ENCODE measurements at regions of chr12 and their contacts with region 1.

Region 1: DNA sequence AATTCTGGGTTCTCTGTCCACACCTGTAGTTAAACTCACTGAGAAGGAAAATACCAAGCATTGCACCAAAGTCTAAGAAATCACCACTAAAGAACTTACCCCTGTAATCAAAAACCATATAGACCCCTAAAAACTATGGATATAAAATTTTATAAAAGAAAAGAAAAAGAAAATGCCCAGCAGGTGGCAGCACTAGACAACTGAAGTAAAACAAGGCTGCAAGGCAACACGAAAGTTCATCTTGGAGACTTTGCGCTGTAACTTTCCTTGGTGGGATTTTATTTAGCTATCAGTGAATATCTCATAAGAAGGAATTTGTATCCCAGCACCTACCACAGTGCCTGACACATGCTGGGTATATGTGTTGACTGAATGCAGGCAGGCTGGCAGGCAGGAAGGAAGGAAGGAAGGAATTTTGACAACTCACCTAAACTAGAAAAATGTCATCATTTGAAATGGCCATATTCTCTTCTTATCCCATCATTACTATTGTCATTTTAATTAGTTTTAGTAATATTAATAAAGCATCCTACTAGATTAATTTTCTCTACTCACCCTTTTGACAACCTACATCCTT is 68.2 kb upstream of the ETV6 start:
- DNase-seq: peak; percentile 62 to 71 (median 67)
- H3K4me3 ChIP-seq: no peak overlapping the region
- H3K4me3 Mint-ChIP-seq: peak overlapping the region in 1 of 8 donors; percentile 59
- H3K27ac ChIP-seq: no peak overlapping the region
- H3K27ac Mint-ChIP-seq: peak overlapping the region in 1 of 7 donors; percentile 79
- H3K4me1 ChIP-seq: peaks cover 3% of the 10 kb centered on the region
- H3K4me1 Mint-ChIP-seq: peaks cover 0 to 4% (median 3%) of the 10 kb centered on the region in 4 donors
- H3K27me3 ChIP-seq: no peaks in the 10 kb centered on the region
- H3K27me3 Mint-ChIP-seq: peaks cover 2 to 3% of the 10 kb centered on the region in 2 donors

Region 2: DNA sequence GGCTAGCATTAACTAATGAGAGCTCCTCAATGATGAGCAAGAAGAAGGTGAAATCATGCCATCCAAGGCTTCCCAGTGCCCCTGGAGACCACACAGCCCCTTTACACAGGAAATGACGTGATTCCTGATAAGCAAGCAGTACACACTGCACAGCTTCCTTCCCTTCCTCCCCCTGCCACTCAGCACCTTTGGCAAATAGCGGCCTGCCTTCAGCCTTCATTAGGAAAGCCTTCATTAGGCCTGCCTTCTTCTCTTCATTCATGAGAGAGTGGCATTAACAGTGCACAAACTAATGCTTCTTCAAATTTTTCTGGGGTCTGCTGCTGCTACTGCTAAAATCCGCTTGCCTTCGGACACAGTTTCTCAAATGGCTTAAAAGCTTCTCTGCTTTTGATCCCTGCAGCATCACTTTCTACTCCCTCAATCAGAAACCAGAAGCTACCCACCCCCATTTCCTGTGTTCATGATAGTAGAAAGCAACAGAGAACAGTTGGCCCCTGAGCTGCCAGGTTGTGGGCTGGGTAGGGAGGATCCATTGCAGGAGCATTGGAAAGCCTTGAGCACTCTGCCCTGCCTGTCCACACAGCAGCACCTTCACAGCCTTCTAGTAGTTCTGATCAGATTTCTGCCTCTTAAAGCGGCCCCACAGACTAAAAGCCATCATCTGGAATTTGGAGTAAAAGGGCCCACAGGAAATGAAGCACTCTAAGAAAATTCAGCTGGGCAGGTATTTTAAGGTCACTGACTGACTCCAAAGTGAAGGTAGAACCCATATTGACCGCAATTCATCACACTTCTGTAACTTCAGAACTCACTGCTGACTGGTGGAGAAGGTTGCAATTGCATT is 35.6 kb before region 1 on chr12:
- CTCF ChIA-PET with region 1: interaction called, 14 read pairs
- POLR2A ChIA-PET with region 1: no interaction called
- intact Hi-C with region 1: no loop called
- DNase-seq: peak; percentile 78 to 82 (median 80)
- H3K4me3 ChIP-seq: peak overlapping the region in 1 of 2 donors; percentile 14
- H3K4me3 Mint-ChIP-seq: peak overlapping the region; percentile 71 to 88 (median 78)
- H3K27ac ChIP-seq: peak overlapping the region; percentile 57
- H3K27ac Mint-ChIP-seq: peak overlapping the region; percentile 94 to 99 (median 96)
- H3K4me1 ChIP-seq: peaks cover 55% of the 10 kb centered on the region
- H3K4me1 Mint-ChIP-seq: peaks cover 32 to 68% (median 51%) of the 10 kb centered on the region in 4 donors
- H3K27me3 ChIP-seq: no peaks in the 10 kb centered on the region
- H3K27me3 Mint-ChIP-seq: no peaks in the 10 kb centered on the region

Region 3: DNA sequence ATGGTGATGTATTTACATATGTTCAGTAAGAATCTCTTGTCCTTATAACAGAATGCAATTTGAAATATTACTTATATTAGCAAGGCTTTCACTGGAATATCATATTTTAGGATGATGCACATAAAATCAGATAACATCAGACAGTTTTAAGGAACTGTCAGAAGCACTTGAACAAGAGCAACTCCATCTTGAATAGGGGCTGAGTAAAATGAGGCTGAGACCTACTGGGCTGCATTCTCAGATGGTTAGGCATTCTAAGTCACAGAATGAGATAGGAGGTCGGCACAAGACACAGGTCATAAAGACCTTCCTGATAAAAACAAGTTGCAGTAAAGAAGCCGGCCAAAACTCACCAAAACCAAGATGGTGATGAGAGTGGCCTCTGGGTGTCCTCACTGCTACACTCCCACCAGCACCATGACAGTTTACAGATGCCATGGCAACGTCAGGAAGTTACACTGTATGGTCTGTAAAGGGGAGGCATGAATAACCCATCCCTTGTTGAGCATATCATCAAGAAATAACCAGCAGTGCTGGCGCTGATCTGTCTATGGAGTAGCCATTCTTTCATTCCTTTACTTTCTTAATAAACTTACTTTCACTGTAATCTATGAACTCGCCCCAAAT is 40.6 kb after region 1 on chr12:
- CTCF ChIA-PET with region 1: interaction called, 3 read pairs
- POLR2A ChIA-PET with region 1: no interaction called
- intact Hi-C with region 1: loop called (anchors 5 kb)
- DNase-seq: peak; percentile 21 to 43 (median 34)
- H3K4me3 ChIP-seq: no peak overlapping the region
- H3K4me3 Mint-ChIP-seq: no peak overlapping the region
- H3K27ac ChIP-seq: no peak overlapping the region
- H3K27ac Mint-ChIP-seq: peak overlapping the region in 2 of 7 donors; percentile 39 to 91
- H3K4me1 ChIP-seq: no peaks in the 10 kb centered on the region
- H3K4me1 Mint-ChIP-seq: peaks cover 0 to 6% (median 3%) of the 10 kb centered on the region in 4 donors
- H3K27me3 ChIP-seq: no peaks in the 10 kb centered on the region
- H3K27me3 Mint-ChIP-seq: no peaks in the 10 kb centered on the region

Region 4: GRCh38 chr12:12070674-12071656 is 489.7 kb after region 1 on chr12 and contains the start of gene BCL2L14:
- CTCF ChIA-PET with region 1: interaction called, 4 read pairs
- POLR2A ChIA-PET with region 1: no interaction called
- intact Hi-C with region 1: loop called (anchors 1 kb)
- DNase-seq: peak in 4 of 5 donors; percentile 17 to 34 (median 24)
- H3K4me3 ChIP-seq: peak within 1 kb of the TSS; percentile 43 to 49
- H3K4me3 Mint-ChIP-seq: peak within 1 kb of the TSS; percentile 74 to 93 (median 84)
- H3K27ac ChIP-seq: peak within 1 kb of the TSS; percentile 39
- H3K27ac Mint-ChIP-seq: peak within 1 kb of the TSS; percentile 56 to 93 (median 81)
- H3K4me1 ChIP-seq: peaks cover 21% of the 10 kb centered on the region
- H3K4me1 Mint-ChIP-seq: peaks cover 11 to 26% (median 20%) of the 10 kb centered on the region in 4 donors
- H3K27me3 ChIP-seq: no peaks in the 10 kb centered on the region
- H3K27me3 Mint-ChIP-seq: no peaks in the 10 kb centered on the region
- total RNA-seq, gene BCL2L14: 1.9 TPM

Region 5: GRCh38 chr12:12334367-12335040 is 753.2 kb after region 1 on chr12:
- CTCF ChIA-PET with region 1: interaction called, 71 read pairs
- POLR2A ChIA-PET with region 1: no interaction called
- intact Hi-C with region 1: no loop called
- DNase-seq: peak; percentile 48 to 61 (median 55)
- H3K4me3 ChIP-seq: no peak overlapping the region
- H3K4me3 Mint-ChIP-seq: peak overlapping the region in 3 of 8 donors; percentile 26 to 38 (median 29)
- H3K27ac ChIP-seq: no peak overlapping the region
- H3K27ac Mint-ChIP-seq: peak overlapping the region in 3 of 7 donors; percentile 32 to 63 (median 45)
- H3K4me1 ChIP-seq: peaks cover 9% of the 10 kb centered on the region
- H3K4me1 Mint-ChIP-seq: peaks cover 8 to 24% (median 11%) of the 10 kb centered on the region in 4 donors
- H3K27me3 ChIP-seq: no peaks in the 10 kb centered on the region
- H3K27me3 Mint-ChIP-seq: no peaks in the 10 kb centered on the region

Measured in CD4-positive, alpha-beta memory T cell (primary cell).